Activated B cell treated with CpG ODN at 0.5 μM for 24 hours (primary cell): ENCODE measurements at regions of chr10 and their contacts with region 1.

Region 1: DNA sequence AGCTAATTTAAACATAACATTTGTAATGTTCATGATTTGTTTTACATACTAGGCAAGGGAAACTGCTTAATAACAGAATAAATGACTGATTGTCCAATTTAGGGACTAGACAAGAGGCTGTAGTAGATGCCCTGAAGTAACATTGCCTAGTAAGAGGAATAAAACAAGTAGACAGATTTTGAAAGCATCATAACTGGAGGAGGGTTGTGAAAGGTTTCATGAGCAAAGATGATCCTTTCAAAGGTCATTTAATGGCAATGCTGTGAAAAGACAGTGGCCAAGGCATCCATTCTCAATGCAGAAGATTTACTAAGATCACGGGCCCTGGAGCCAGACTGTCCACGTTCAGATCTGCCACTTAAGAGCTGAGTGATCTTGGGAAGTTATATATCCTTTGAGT is 44.8 kb upstream of the HHEX start:
- DNase-seq: no peak
- ATAC-seq: no peak
- H3K4me3 Mint-ChIP-seq: no peak overlapping the region
- H3K27ac Mint-ChIP-seq: no peak overlapping the region
- H3K4me1 Mint-ChIP-seq: peaks cover 5% of the 10 kb centered on the region
- H3K27me3 Mint-ChIP-seq: no peaks in the 10 kb centered on the region
- CTCF ChIP-seq: no peak

Region 2: GRCh38 chr10:92517034-92517655 is 127.8 kb before region 1 on chr10:
- CTCF ChIA-PET with region 1: no interaction called
- POLR2A ChIA-PET with region 1: no interaction called
- intact Hi-C with region 1: loop called (anchors 2 kb)
- DNase-seq: no peak
- ATAC-seq: peak; percentile 88
- H3K4me3 Mint-ChIP-seq: no peak overlapping the region
- H3K27ac Mint-ChIP-seq: no peak overlapping the region
- H3K4me1 Mint-ChIP-seq: peaks cover 6% of the 10 kb centered on the region
- H3K27me3 Mint-ChIP-seq: no peaks in the 10 kb centered on the region
- CTCF ChIP-seq: peak; percentile 30

Region 3: GRCh38 chr10:92538231-92538958 is 106.5 kb before region 1 on chr10:
- CTCF ChIA-PET with region 1: no interaction called
- POLR2A ChIA-PET with region 1: no interaction called
- intact Hi-C with region 1: no loop called
- DNase-seq: no peak
- ATAC-seq: no peak
- H3K4me3 Mint-ChIP-seq: no peak overlapping the region
- H3K27ac Mint-ChIP-seq: no peak overlapping the region
- H3K4me1 Mint-ChIP-seq: peaks cover 26% of the 10 kb centered on the region
- H3K27me3 Mint-ChIP-seq: no peaks in the 10 kb centered on the region
- CTCF ChIP-seq: no peak

Region 4: GRCh38 chr10:92848441-92849233 is 203.7 kb after region 1 on chr10 and contains the start of gene EXOC6:
- CTCF ChIA-PET with region 1: no interaction called
- POLR2A ChIA-PET with region 1: no interaction called
- intact Hi-C with region 1: no loop called
- DNase-seq: peak; percentile 89
- ATAC-seq: peak; percentile 84
- H3K4me3 Mint-ChIP-seq: peak within 1 kb of the TSS; percentile 87
- H3K27ac Mint-ChIP-seq: peak within 1 kb of the TSS; percentile 87
- H3K4me1 Mint-ChIP-seq: peaks cover 34% of the 10 kb centered on the region
- H3K27me3 Mint-ChIP-seq: no peaks in the 10 kb centered on the region
- CTCF ChIP-seq: no peak
- total RNA-seq, gene EXOC6: 15.3 and 17.3 TPM in 2 replicates